ENCODE measurements at regions of chr9 and their contacts with region 1.

Region 1: GRCh38 chr9:88593537-88594185 is 58.7 kb downstream of the NXNL2 start:
- DNase-seq: peak; percentile 38 to 57
- ATAC-seq: peak; percentile 73 to 83; a peak in 5 of 6 replicates
- H3K4me3 ChIP-seq: no peak overlapping the region
- H3K27ac ChIP-seq: peak overlapping the region; percentile 5 to 50; a peak in 4 of 6 replicates
- H3K4me1 ChIP-seq: no peaks in the 10 kb centered on the region
- CTCF ChIP-seq: peak; percentile 78
- EP300 ChIP-seq: no peak
- POLR2A ChIP-seq: no peak
- RAD21 ChIP-seq: peak; percentile 85

Region 2: DNA sequence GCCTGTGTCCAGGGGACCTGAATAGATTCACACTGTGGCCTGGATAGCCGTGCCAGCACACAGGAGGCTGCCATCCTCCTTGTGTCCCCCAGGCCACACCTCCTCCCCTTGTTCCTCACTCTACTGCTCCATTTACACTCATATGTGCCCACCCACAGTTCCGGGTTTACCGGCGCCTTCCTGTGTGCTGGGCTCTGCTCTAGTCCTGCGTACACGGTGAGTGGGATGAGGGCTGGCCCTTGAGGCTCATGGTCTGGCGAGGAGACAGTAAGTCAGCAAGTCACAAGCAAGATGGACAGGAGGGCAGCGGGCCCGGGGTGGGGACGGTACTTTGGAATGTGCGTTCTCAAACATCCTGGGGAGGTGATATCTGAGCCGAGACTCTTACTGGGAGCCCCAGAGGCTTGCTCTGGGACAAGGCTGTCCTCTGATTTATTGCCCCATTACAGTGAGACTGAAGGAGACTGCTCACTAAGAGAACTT is 91.1 kb before region 1 on chr9:
- CTCF ChIA-PET with region 1: no interaction called
- POLR2A ChIA-PET with region 1: no interaction called
- DNase-seq: no peak
- ATAC-seq: peak in 1 of 2 experiments; percentile 61; a peak in 2 of 6 replicates
- H3K4me3 ChIP-seq: no peak overlapping the region
- H3K27ac ChIP-seq: no peak overlapping the region
- H3K4me1 ChIP-seq: no peaks in the 10 kb centered on the region
- CTCF ChIP-seq: no peak
- EP300 ChIP-seq: no peak
- POLR2A ChIP-seq: no peak
- RAD21 ChIP-seq: no peak

Region 3: DNA sequence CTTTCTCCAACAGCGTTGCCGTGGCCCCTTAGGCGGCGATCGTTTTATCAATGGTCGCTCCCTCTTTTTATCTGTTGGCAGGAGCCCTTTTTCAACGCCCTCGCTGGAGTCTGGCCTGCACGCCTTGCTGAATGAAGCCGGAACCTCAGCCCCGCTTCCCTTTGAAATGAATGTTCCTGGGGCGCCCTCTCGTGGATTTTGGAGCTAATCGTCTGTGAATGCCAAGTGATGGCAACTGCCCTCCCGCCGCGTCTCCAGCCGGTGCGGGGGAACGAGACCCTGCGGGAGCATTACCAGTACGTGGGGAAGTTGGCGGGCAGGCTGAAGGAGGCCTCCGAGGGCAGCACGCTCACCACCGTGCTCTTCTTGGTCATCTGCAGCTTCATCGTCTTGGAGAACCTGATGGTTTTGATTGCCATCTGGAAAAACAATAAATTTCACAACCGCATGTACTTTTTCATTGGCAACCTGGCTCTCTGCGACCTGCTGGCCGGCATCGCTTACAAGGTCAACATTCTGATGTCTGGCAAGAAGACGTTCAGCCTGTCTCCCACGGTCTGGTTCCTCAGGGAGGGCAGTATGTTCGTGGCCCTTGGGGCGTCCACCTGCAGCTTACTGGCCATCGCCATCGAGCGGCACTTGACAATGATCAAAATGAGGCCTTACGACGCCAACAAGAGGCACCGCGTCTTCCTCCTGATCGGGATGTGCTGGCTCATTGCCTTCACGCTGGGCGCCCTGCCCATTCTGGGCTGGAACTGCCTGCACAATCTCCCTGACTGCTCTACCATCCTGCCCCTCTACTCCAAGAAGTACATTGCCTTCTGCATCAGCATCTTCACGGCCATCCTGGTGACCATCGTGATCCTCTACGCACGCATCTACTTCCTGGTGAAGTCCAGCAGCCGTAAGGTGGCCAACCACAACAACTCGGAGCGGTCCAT is 407.6 kb after region 1 on chr9:
- CTCF ChIA-PET with region 1: interaction called, 31 read pairs
- POLR2A ChIA-PET with region 1: no interaction called
- DNase-seq: peak; percentile 76 to 81
- ATAC-seq: peak; percentile 79 to 89
- H3K4me3 ChIP-seq: no peak overlapping the region
- H3K27ac ChIP-seq: peak overlapping the region; percentile 67 to 81
- H3K4me1 ChIP-seq: peaks cover 27% of the 10 kb centered on the region
- CTCF ChIP-seq: peak; percentile 85
- EP300 ChIP-seq: no peak
- POLR2A ChIP-seq: no peak
- RAD21 ChIP-seq: peak; percentile 93 to 97